ENCODE measurements at regions of chr2 and their contacts with region 1.

Region 1: DNA sequence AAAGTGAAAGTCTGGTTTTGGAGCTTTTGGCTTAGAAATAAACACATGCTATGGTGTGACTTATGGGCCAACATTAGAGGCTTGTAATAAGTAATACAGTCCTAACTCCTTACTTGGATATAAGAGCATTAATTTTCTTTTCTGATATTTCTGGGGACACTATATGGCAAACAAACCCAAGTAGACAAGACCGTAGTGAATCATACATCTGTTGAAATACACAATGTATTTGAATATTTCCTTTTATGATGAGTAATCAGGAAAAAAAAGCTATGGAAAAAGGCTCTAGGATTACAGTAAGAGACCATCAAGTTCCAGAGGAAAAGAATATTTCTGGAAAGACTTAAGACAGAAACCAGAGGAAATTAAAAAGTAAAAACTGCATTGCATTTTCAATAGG is 146.0 kb upstream of the CYP26B1 start:
- DNase-seq: peak; percentile 57
- ATAC-seq: peak; percentile 43
- H3K4me3 ChIP-seq: no peak overlapping the region
- H3K27ac ChIP-seq: no peak overlapping the region
- H3K4me1 ChIP-seq: peaks cover 30% of the 10 kb centered on the region
- H3K27me3 ChIP-seq: no peaks in the 10 kb centered on the region
- CTCF ChIP-seq: no peak

Region 2: DNA sequence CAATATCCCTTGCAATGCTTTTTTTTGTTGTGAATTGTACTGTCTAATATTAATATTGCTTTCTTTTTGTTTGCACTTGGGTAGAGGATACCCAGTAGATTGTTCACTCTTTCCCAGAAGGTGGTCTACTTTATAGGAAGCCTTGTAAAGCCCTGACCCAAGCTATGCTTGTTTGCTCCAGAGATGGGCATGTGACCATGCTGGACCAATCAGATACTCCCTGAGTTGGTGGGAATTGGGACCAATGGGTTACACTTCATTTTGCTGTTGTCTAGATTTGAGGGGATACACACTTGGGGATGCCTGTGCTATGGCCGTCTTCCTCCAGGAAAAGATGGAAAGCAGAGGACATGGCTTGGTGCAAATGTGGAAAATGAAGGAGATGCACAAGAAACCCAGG is 526.0 kb before region 1 on chr2:
- CTCF ChIA-PET with region 1: no interaction called
- POLR2A ChIA-PET with region 1: no interaction called
- intact Hi-C with region 1: no loop called
- DNase-seq: no peak
- ATAC-seq: no peak
- H3K4me3 ChIP-seq: no peak overlapping the region
- H3K27ac ChIP-seq: no peak overlapping the region
- H3K4me1 ChIP-seq: peaks cover 10% of the 10 kb centered on the region
- H3K27me3 ChIP-seq: no peaks in the 10 kb centered on the region
- CTCF ChIP-seq: no peak

Region 3: GRCh38 chr2:72236445-72237067 is 57.1 kb before region 1 on chr2:
- CTCF ChIA-PET with region 1: no interaction called
- POLR2A ChIA-PET with region 1: interaction called, 5 read pairs
- intact Hi-C with region 1: loop called (anchors 5 kb)
- DNase-seq: peak; percentile 80
- ATAC-seq: peak; percentile 78
- H3K4me3 ChIP-seq: no peak overlapping the region
- H3K27ac ChIP-seq: no peak overlapping the region
- H3K4me1 ChIP-seq: peaks cover 14% of the 10 kb centered on the region
- H3K27me3 ChIP-seq: no peaks in the 10 kb centered on the region
- CTCF ChIP-seq: no peak

Measured in PC-3 (cell line).